PC-9 (cell line): ENCODE measurements at regions of chr12 and their contacts with region 1.

Region 1: DNA sequence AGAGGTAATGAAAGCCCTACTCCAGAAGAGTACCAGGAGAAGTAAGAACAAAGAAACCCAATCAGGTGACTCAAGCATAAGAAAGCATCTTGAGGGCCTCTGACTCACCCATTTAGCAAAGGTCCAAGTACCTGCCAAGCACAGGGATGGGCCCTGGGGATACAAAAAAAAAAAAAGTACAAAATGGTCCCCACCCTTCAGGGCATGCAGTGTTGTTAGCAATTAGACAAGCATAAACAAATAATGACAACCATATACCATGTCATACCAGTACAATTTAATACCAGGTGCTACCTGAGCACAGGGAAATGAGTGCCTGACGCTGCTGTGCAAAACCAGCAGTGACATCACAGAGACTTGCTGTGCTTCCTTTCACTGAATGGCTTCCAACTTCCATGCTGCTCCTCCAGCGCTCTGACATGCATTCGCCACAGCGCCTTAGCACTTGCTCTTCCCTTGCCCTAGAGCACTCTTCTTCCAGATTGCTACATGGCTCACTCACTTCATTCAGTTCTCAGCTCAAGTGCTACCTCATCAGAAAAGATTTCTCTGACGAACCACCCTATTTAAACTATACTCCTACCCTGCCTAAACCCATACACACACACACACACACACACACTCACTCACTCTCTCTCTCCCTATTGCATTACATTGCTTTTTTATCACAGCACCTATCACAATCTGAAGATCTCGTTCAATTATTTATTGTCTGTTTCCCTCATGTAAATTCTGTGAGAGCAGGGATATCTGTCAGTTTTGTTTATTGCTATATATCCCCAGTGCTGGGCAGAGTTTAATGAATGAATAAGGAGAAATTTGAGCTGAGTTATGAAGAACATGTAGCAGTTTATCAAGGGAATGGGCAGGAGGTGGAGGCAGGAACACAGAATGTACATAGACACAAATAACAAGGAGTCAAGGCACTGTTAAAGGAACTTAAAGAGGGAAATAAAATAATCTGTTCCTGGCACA is 12.9 kb upstream of the EPS8 start:
- DNase-seq: peak; percentile 77 to 93
- H3K4me3 ChIP-seq: no peak overlapping the region
- H3K27ac ChIP-seq: peak overlapping the region; percentile 44
- H3K4me1 ChIP-seq: peaks cover 61% of the 10 kb centered on the region
- H3K27me3 ChIP-seq: no peaks in the 10 kb centered on the region
- CTCF ChIP-seq: no peak

Region 2: GRCh38 chr12:15599266-15600037 is 202.6 kb before region 1 on chr12:
- CTCF ChIA-PET with region 1: no interaction called
- POLR2A ChIA-PET with region 1: no interaction called
- intact Hi-C with region 1: loop called (anchors 2 kb)
- DNase-seq: no peak
- H3K4me3 ChIP-seq: no peak overlapping the region
- H3K27ac ChIP-seq: peak overlapping the region; percentile 25; the same call in 1 of the 2 replicates
- H3K4me1 ChIP-seq: peaks cover 26% of the 10 kb centered on the region
- H3K27me3 ChIP-seq: no peaks in the 10 kb centered on the region
- CTCF ChIP-seq: no peak

Region 3: DNA sequence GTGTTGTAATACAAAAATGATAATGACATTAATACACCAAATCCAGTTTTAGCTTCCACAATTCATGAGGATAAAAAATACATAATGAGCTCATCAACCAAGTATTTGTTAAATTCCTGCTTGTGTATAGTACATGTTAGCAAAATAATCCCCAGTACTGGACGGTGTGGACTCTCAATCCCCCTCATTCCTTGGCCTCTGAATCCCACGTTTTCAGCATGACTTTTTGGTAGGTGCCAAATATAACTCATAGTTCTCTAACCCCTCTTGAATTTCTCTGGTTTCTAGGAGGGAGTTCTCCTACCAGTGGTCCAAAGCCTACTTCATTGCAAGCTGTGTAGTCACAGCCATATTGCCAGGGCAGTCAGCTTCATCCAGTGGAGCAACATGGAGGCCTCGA is 28.5 kb after region 1 on chr12:
- CTCF ChIA-PET with region 1: no interaction called
- POLR2A ChIA-PET with region 1: interaction called, 5 read pairs
- intact Hi-C with region 1: loop called (anchors 2 kb)
- DNase-seq: no peak
- H3K4me3 ChIP-seq: no peak overlapping the region
- H3K27ac ChIP-seq: no peak overlapping the region
- H3K4me1 ChIP-seq: peaks cover 25% of the 10 kb centered on the region
- H3K27me3 ChIP-seq: no peaks in the 10 kb centered on the region
- CTCF ChIP-seq: no peak

Region 4: DNA sequence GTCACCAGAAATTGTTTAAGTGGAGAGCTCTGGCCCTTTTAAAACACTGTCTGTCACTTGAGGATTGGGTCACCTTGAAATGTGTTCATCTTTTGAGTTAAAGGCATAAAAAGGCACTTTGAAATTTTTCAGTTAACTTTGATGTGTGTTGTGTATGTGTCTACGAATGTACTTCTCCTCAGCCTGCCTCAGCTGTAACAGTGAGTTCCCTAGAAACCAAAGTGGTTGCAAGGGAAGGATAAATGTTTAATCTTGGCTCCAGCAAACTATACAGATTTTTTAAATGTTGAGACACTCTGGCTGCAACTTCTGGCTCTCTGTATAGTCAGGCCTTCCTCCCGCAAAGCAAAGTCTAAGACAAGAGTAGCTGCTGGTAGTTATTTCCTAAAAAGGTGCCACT is 117.4 kb after region 1 on chr12:
- CTCF ChIA-PET with region 1: no interaction called
- POLR2A ChIA-PET with region 1: no interaction called
- intact Hi-C with region 1: no loop called
- DNase-seq: no peak
- H3K4me3 ChIP-seq: no peak overlapping the region
- H3K27ac ChIP-seq: no peak overlapping the region
- H3K4me1 ChIP-seq: no peaks in the 10 kb centered on the region
- H3K27me3 ChIP-seq: no peaks in the 10 kb centered on the region
- CTCF ChIP-seq: no peak